ENCODE measurements at regions of chr16 and their contacts with region 1.

Region 1: GRCh38 chr16:30692381-30693064 is 6.4 kb upstream of the SRCAP start:
- DNase-seq: no peak
- ATAC-seq: no peak
- H3K4me3 ChIP-seq: no peak overlapping the region
- H3K27ac ChIP-seq: no peak overlapping the region
- H3K4me1 ChIP-seq: no peaks in the 10 kb centered on the region
- CTCF ChIP-seq: no peak
- EP300 ChIP-seq: no peak
- POLR2A ChIP-seq: no peak
- RAD21 ChIP-seq: no peak

Region 2: DNA sequence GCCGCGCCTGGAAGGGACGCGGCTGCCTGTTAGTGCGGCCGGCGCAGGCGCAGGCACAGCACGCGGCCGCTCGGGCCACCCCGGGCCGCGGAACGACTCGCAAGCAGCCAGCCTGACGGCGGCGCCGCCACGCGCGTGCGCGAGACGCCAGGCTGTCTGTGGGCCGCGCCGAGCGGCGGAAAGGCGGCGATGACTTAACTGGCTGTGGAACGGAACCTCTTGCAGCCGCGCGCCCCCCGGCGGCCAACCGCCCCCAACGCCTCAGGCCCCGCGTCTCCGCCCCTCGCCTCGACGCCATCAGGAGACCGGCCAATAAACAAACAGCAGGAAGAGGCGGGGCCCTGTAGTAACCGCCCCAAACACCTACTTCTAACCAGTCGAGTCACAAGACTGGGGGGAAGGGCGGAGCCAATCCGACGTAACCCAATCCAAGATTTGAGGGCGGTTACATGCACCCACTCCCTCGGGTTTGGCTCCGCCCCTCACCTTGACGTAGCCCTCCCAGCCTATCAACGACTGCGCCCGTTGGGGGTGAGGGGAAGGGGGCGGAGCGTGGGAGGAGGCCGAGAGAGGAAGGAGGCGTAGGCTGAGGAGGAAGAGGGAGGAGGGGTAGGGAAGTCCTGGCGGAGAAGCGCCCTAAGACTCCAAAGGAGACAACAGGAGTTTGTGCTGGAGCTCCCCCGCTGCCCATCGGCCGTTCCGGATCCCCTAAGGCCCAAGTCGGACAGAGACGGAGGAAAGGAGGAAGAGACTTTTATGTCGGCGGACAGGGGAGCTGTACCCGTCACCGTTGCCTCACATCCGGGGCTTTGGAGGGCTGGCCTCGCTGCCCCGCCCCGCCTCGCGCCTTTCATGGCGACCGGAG is 34.4 kb before region 1 on chr16 and contains the start of gene FBRS:
- CTCF ChIA-PET with region 1: interaction called, 39 read pairs
- POLR2A ChIA-PET with region 1: interaction called, 14 read pairs
- DNase-seq: peak; percentile 97 to 100
- ATAC-seq: peak; percentile 83 to 90
- H3K4me3 ChIP-seq: peak within 1 kb of the TSS; percentile 90
- H3K27ac ChIP-seq: peak within 1 kb of the TSS; percentile 87 to 99
- H3K4me1 ChIP-seq: peaks cover 23% of the 10 kb centered on the region
- CTCF ChIP-seq: peak; percentile 88
- EP300 ChIP-seq: no peak
- POLR2A ChIP-seq: peak; percentile 83
- RAD21 ChIP-seq: peak; percentile 51 to 80
- polyA plus RNA-seq, gene FBRS: 5.9 and 8.1 TPM in 2 replicates

Region 3: DNA sequence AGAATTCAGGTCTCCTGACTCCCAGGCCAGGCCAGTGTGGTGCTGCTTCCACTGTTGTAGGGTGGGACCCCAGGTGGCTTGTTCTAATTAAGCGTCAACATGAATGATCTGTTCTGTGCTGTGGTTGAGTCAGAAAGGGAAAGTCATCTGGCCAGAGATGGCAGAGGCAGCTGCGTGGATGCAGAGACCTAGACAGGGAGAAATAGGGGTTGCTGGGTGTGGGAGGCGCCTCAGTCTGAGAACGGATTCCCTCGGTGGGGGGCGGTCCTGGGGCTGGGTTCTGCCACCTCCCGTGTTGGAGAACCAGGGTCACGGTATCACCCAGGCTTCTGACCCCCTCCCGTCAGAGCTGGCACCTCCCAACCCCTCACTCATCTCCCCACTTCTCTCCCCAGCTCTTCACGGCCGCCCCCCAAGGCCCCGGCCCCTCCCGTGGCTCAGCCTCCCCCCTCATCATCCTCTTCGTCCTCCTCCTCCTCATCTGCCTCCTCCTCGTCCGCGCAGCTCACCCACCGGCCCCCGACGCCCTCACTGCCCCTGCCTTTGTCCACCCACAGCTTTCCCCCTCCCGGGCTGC is 28.6 kb before region 1 on chr16:
- CTCF ChIA-PET with region 1: interaction called, 39 read pairs
- POLR2A ChIA-PET with region 1: interaction called, 14 read pairs
- DNase-seq: no peak
- ATAC-seq: no peak
- H3K4me3 ChIP-seq: no peak overlapping the region
- H3K27ac ChIP-seq: no peak overlapping the region
- H3K4me1 ChIP-seq: peaks cover 14% of the 10 kb centered on the region
- CTCF ChIP-seq: no peak
- EP300 ChIP-seq: no peak
- POLR2A ChIP-seq: no peak
- RAD21 ChIP-seq: no peak

Region 4: GRCh38 chr16:30677931-30678585 is 14.5 kb before region 1 on chr16:
- CTCF ChIA-PET with region 1: interaction called, 24 read pairs
- POLR2A ChIA-PET with region 1: no interaction called
- DNase-seq: no peak
- ATAC-seq: no peak
- H3K4me3 ChIP-seq: no peak overlapping the region
- H3K27ac ChIP-seq: no peak overlapping the region
- H3K4me1 ChIP-seq: no peaks in the 10 kb centered on the region
- CTCF ChIP-seq: no peak
- EP300 ChIP-seq: no peak
- POLR2A ChIP-seq: no peak
- RAD21 ChIP-seq: no peak

Region 5: DNA sequence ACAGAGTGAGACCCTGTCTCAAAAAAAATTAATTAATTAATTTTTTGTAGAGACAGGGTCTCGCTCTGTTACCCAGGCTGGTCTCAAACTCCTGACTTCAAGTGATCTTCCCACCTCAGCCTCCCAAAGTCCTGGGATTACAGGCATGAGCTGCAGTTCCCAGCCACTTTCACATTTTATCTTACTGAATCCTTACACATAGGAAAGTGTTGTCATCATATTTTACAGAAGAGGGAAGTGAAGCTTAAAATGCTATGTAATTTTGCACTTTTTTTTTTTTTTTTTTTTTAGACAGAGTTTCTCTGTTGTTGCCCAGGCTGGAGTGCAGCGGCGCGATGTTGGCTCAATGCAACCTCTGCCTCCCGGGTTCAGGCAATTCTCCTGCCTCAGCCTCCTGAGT is 115.6 kb after region 1 on chr16:
- CTCF ChIA-PET with region 1: no interaction called
- POLR2A ChIA-PET with region 1: no interaction called
- DNase-seq: no peak
- ATAC-seq: no peak
- H3K4me3 ChIP-seq: no peak overlapping the region
- H3K27ac ChIP-seq: no peak overlapping the region
- H3K4me1 ChIP-seq: peaks cover 8% of the 10 kb centered on the region; the same call in 1 of the 3 replicates
- CTCF ChIP-seq: no peak
- EP300 ChIP-seq: no peak
- POLR2A ChIP-seq: no peak
- RAD21 ChIP-seq: no peak